Activated CD4-positive, alpha-beta T cell treated with anti-CD3 and anti-CD28 coated beads, Interleukin-2, amount 10 ng/mL, durations not matched to agents 24 days and 14 days (primary cell): ENCODE measurements at regions of chr1 and their contacts with region 1.

Region 1: GRCh38 chr1:5975133-5975880 is 16.9 kb downstream of the NPHP4 start:
- DNase-seq: peak; percentile 84
- H3K4me3 Mint-ChIP-seq: peak overlapping the region; percentile 55
- H3K27ac Mint-ChIP-seq: peak overlapping the region; percentile 82
- H3K4me1 Mint-ChIP-seq: peaks cover 14% of the 10 kb centered on the region
- H3K27me3 Mint-ChIP-seq: no peaks in the 10 kb centered on the region

Region 2: GRCh38 chr1:5915587-5916571 is 59.4 kb before region 1 on chr1:
- intact Hi-C with region 1: loop called (anchors 5 kb)
- DNase-seq: peak; percentile 78
- H3K4me3 Mint-ChIP-seq: no peak overlapping the region
- H3K27ac Mint-ChIP-seq: no peak overlapping the region
- H3K4me1 Mint-ChIP-seq: peaks cover 4% of the 10 kb centered on the region
- H3K27me3 Mint-ChIP-seq: no peaks in the 10 kb centered on the region